Right lobe of liver (tissue), 6 donors: ENCODE measurements at regions of chr18 and their contacts with region 1.

Region 1: GRCh38 chr18:74097598-74098202 is 49.9 kb downstream of the FBXO15 start:
- DNase-seq: no peak
- ATAC-seq: no peak
- H3K4me3 ChIP-seq: no peak overlapping the region
- H3K27ac ChIP-seq: no peak overlapping the region
- H3K4me1 ChIP-seq: no peaks in the 10 kb centered on the region
- H3K27me3 ChIP-seq: no peaks in the 10 kb centered on the region
- CTCF ChIP-seq: no peak
- POLR2A ChIP-seq: no peak

Region 2: GRCh38 chr18:74013955-74014354 is 83.7 kb before region 1 on chr18:
- intact Hi-C with region 1: loop called in 1 of 2 experiments (anchors 10 kb)
- DNase-seq: no peak
- ATAC-seq: no peak
- H3K4me3 ChIP-seq: no peak overlapping the region
- H3K27ac ChIP-seq: no peak overlapping the region
- H3K4me1 ChIP-seq: no peaks in the 10 kb centered on the region
- H3K27me3 ChIP-seq: no peaks in the 10 kb centered on the region
- CTCF ChIP-seq: no peak
- POLR2A ChIP-seq: no peak

Region 3: GRCh38 chr18:74476140-74476539 is 378.4 kb after region 1 on chr18:
- intact Hi-C with region 1: no loop called
- DNase-seq: no peak
- ATAC-seq: no peak
- H3K4me3 ChIP-seq: no peak overlapping the region
- H3K27ac ChIP-seq: no peak overlapping the region
- H3K4me1 ChIP-seq: peaks cover 0 to 31% (median 3%) of the 10 kb centered on the region in 4 donors
- H3K27me3 ChIP-seq: no peaks in the 10 kb centered on the region
- CTCF ChIP-seq: peak in 3 of 4 donors; percentile 27 to 36 (median 35)
- POLR2A ChIP-seq: no peak